Posterior vena cava (tissue), 2 donors: ENCODE measurements at regions of chr7 and their contacts with region 1.

Region 1: DNA sequence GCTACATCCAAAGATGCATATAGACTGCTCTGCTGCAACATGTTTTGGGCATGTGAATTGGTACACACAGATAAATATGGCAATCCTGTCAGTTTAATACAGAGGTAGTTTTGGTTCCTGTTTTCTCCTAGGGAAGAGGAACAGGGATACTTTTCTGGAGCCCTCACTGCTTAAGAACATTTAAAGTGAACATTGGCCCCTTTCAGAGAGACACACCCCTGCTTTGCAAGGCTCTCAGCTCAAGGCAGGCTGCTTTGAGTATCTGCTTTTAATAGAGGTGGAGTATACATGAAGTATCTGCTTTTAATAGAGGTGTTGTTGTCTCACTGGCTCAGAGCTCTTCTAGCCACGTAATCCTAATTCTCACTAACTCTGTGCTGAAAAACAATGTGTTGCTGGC is 38.9 kb downstream of the CYP51A1 start:
- DNase-seq: no peak

Region 2: DNA sequence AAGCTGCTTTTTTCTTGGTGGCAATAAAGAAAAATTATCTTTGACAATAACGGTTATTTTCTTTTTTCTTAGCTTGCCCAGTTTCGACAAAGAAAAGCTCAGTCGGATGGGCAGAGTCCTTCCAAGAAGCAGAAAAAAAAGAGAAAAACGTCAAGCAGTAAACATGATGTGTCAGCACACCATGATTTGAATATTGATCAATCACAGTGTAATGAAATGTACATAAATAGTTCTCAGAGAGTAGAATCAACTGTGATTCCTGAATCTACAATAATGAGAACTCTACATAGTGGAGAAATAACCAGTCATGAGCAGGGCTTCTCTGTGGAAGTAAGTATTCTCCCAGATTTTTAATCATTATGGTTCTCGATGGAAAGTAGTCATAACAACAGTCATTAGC is 121.7 kb before region 1 on chr7:
- intact Hi-C with region 1: no loop called
- DNase-seq: no peak

Region 3: GRCh38 chr7:92517631-92518030 is 422.3 kb after region 1 on chr7:
- intact Hi-C with region 1: loop called in 1 of 2 experiments (anchors 10 kb)
- DNase-seq: no peak